ENCODE measurements at regions of chr2 and their contacts with region 1.

Region 1: GRCh38 chr2:98118161-98118560 is 31.2 kb downstream of the VWA3B start:
- DNase-seq: no peak
- ATAC-seq: no peak
- H3K4me3 ChIP-seq: no peak overlapping the region
- H3K27ac ChIP-seq: no peak overlapping the region
- H3K4me1 ChIP-seq: peaks cover 0 to 13% (median 0%) of the 10 kb centered on the region in 9 donors
- H3K27me3 ChIP-seq: peaks cover 0 to 5% (median 0%) of the 10 kb centered on the region in 7 donors
- CTCF ChIP-seq: no peak

Region 2: GRCh38 chr2:98050070-98050469 is 68.1 kb before region 1 on chr2:
- intact Hi-C with region 1: loop called in 1 of 10 experiments (anchors 10 kb)
- DNase-seq: no peak
- ATAC-seq: no peak
- H3K4me3 ChIP-seq: no peak overlapping the region
- H3K27ac ChIP-seq: no peak overlapping the region
- H3K4me1 ChIP-seq: no peaks in the 10 kb centered on the region
- H3K27me3 ChIP-seq: peaks cover 0 to 12% (median 0%) of the 10 kb centered on the region in 7 donors
- CTCF ChIP-seq: no peak

Region 3: GRCh38 chr2:98084151-98084868 is 33.9 kb before region 1 on chr2:
- intact Hi-C with region 1: no loop called
- DNase-seq: no peak
- ATAC-seq: no peak
- H3K4me3 ChIP-seq: no peak overlapping the region
- H3K27ac ChIP-seq: no peak overlapping the region
- H3K4me1 ChIP-seq: peaks cover 0 to 42% (median 14%) of the 10 kb centered on the region in 9 donors
- H3K27me3 ChIP-seq: peaks cover 0 to 43% (median 22%) of the 10 kb centered on the region in 7 donors
- CTCF ChIP-seq: no peak

Region 4: GRCh38 chr2:98172951-98173350 is 54.8 kb after region 1 on chr2:
- intact Hi-C with region 1: no loop called
- DNase-seq: no peak
- ATAC-seq: no peak
- H3K4me3 ChIP-seq: no peak overlapping the region
- H3K27ac ChIP-seq: no peak overlapping the region
- H3K4me1 ChIP-seq: peaks cover 0 to 6% (median 0%) of the 10 kb centered on the region in 9 donors
- H3K27me3 ChIP-seq: peaks cover 0 to 25% (median 0%) of the 10 kb centered on the region in 7 donors
- CTCF ChIP-seq: no peak

Region 5: DNA sequence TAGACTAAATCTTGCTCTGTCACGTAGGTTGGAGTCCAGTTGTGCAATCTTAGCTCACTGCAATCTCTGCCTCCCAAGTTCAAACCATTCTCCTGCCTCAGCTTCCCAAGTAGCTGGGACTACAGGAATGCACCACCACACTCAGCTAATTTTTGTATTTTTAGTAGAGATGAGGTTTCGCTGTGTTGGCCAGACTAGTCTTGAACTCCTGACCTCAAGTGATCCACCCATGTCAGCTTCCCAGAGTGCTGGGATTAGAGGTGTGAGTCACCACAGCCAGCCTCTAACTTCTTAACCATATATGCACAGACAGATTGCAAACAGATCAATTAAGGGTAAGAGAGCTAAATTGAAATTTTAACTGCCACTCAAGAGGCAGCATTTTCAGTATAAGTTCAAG is 206.0 kb after region 1 on chr2:
- intact Hi-C with region 1: no loop called
- DNase-seq: no peak
- ATAC-seq: no peak
- H3K4me3 ChIP-seq: no peak overlapping the region
- H3K27ac ChIP-seq: no peak overlapping the region
- H3K4me1 ChIP-seq: no peaks in the 10 kb centered on the region
- H3K27me3 ChIP-seq: no peaks in the 10 kb centered on the region
- CTCF ChIP-seq: no peak